Ascending aorta (tissue), 2 donors: ENCODE measurements at regions of chr6 and their contacts with region 1.

Region 1: GRCh38 chr6:29752451-29753308 is 29.4 kb downstream of the HLA-F start:
- DNase-seq: peak; percentile 74 to 96
- H3K4me3 ChIP-seq: peak overlapping the region; percentile 72 to 76
- H3K27ac ChIP-seq: peak overlapping the region; percentile 94 to 96
- H3K4me1 ChIP-seq: peaks cover 8 to 10% of the 10 kb centered on the region in 2 donors
- H3K27me3 ChIP-seq: no peaks in the 10 kb centered on the region
- CTCF ChIP-seq: peak; percentile 94 to 96 (median 96)

Region 2: GRCh38 chr6:29649701-29650673 is 102.7 kb before region 1 on chr6:
- intact Hi-C with region 1: loop called (anchors 2 kb)
- DNase-seq: peak; percentile 92 to 99
- H3K4me3 ChIP-seq: peak overlapping the region; percentile 55 to 67
- H3K27ac ChIP-seq: peak overlapping the region; percentile 94 to 95
- H3K4me1 ChIP-seq: peaks cover 0 to 2% of the 10 kb centered on the region in 2 donors
- H3K27me3 ChIP-seq: no peaks in the 10 kb centered on the region
- CTCF ChIP-seq: peak; percentile 76 to 92 (median 85)

Region 3: DNA sequence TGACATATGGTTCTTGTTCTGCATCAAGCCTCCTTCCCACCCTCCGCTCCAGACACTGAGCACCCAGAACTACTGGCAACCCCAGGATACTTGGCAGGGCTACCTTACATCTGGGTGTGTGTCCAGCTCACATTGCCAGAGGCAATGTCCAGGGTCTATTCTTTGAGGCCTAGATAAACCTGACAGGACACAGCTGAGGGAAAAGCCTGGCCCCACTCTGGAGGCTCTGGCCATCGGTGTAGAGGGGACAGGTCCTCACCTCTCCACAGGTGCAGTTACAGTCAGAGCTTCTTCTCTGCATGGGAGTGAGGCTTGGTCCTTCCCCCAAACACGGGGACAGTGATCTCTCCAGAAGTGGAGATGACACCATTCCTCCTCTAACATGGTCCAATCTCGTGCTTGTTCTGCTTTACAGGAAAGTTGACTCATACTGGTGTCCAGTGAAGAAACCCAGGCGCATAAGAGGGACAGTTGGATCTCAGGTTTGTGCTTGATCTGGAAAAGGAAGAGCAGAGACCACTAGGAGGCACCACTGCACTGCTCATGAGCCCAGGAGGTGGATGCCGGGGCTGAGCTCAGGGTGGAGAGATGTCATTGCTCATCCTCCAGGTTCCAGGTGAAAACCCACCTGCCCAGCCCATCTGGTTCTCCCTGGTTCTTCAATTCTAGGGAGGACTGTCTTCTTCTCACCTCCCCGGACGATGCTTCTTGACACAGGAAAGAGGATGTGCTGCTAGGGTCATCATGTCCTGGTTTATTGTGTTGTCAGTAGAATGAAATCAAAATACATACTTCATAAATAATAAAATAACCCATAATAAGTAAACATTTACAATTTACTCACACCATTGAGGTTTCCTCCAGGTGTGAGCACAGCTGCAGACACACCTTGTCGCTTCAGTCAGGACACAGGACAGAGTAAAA is 14.7 kb before region 1 on chr6:
- intact Hi-C with region 1: loop called (anchors 2 kb)
- DNase-seq: peak in 1 of 2 donors; percentile 76
- H3K4me3 ChIP-seq: no peak overlapping the region
- H3K27ac ChIP-seq: no peak overlapping the region
- H3K4me1 ChIP-seq: no peaks in the 10 kb centered on the region
- H3K27me3 ChIP-seq: no peaks in the 10 kb centered on the region
- CTCF ChIP-seq: peak; percentile 61 to 72 (median 72)

Region 4: GRCh38 chr6:30061092-30061857 is 308.6 kb after region 1 on chr6 and contains the start of gene POLR1H:
- intact Hi-C with region 1: loop called (anchors 2 kb)
- DNase-seq: peak; percentile 70 to 95
- H3K4me3 ChIP-seq: peak within 1 kb of the TSS; percentile 77 to 81
- H3K27ac ChIP-seq: peak within 1 kb of the TSS; percentile 81 to 90
- H3K4me1 ChIP-seq: peaks cover 3 to 16% of the 10 kb centered on the region in 2 donors
- H3K27me3 ChIP-seq: no peaks in the 10 kb centered on the region
- CTCF ChIP-seq: peak in 1 of 3 experiments; percentile 7
- total RNA-seq, gene POLR1H: 36.9 TPM